IMR-90 (cell line): ENCODE measurements at regions of chr1 and their contacts with region 1.

Region 1: DNA sequence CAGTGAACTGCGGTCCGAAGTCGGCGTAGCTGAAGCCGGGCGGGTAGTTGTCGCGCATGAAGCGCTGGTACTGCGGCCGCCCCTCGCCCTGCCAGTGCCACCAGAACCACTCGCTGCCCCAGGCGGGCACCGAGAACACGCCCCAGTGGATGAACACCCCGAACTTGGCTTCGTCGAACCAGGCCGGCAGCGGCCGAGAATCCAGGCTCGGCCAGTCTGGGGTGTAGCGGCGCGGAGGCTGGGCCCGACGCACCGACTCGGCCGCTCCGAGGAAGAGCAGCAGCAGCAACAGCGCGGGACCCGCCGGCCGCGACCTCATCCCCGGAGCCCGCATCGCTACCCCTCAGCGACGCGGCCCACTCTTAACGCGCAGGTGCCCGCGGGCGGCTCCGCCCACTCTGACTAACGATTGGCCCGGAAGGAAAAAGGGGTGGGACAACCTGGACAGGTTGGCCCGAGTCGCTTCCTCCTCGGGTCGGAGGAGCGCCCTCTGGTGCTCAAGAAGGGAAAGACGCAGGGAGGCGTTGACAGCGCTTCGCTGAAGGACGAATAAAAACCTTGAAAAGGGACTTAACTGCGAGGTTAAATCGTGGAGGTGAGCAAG is at the start of gene FUCA1:
- DNase-seq: peak; percentile 77
- ATAC-seq: peak; percentile 99
- H3K4me3 ChIP-seq: peak within 1 kb of the TSS; percentile 61
- H3K27ac ChIP-seq: no peak within 1 kb of the TSS
- H3K4me1 ChIP-seq: no peaks in the 10 kb centered on the region
- H3K27me3 ChIP-seq: peaks cover 24% of the 10 kb centered on the region
- CTCF ChIP-seq: peak; percentile 84
- POLR2A ChIP-seq: no peak
- RAD21 ChIP-seq: peak; percentile 60
- total RNA-seq, gene FUCA1: 2.8 and 2.9 TPM in 2 replicates

Region 2: DNA sequence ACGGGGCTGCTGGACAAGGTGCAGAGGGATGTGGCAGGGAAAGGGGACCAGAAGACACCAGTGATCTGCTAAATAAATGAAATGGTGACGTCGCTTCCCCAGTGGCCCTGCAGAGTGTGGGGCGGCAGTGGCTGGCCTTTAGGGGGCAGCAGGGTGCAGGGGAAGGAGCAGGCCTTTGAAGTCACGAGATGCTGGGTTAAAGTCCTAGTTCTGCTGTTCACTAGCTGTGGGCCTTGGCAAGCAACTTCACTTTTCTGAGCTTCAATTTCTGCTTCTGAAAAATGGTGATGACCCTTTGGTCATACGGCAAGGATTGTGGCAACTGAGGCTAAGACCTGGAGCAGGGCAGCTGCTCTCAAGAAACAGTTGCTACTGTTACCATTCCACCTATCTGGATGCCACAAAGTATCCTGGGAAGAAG is 58.3 kb before region 1 on chr1:
- CTCF ChIA-PET with region 1: interaction called, 3 read pairs
- POLR2A ChIA-PET with region 1: no interaction called
- dilution Hi-C with region 1: no loop called
- in situ Hi-C with region 1: no loop called
- intact Hi-C with region 1: loop called (anchors 1 kb)
- DNase-seq: peak; percentile 51
- ATAC-seq: peak; percentile 91
- H3K4me3 ChIP-seq: no peak overlapping the region
- H3K27ac ChIP-seq: no peak overlapping the region
- H3K4me1 ChIP-seq: no peaks in the 10 kb centered on the region
- H3K27me3 ChIP-seq: no peaks in the 10 kb centered on the region
- CTCF ChIP-seq: peak; percentile 75
- POLR2A ChIP-seq: no peak
- RAD21 ChIP-seq: peak; percentile 74